ENCODE measurements at regions of chr1 and their contacts with region 1.

Region 1: GRCh38 chr1:200310824-200311223 is 99.0 kb downstream of the ZNF281 start:
- DNase-seq: no peak
- H3K4me3 ChIP-seq: no peak overlapping the region
- H3K27ac ChIP-seq: no peak overlapping the region
- H3K4me1 ChIP-seq: peaks cover 26% of the 10 kb centered on the region
- CTCF ChIP-seq: no peak

Region 2: DNA sequence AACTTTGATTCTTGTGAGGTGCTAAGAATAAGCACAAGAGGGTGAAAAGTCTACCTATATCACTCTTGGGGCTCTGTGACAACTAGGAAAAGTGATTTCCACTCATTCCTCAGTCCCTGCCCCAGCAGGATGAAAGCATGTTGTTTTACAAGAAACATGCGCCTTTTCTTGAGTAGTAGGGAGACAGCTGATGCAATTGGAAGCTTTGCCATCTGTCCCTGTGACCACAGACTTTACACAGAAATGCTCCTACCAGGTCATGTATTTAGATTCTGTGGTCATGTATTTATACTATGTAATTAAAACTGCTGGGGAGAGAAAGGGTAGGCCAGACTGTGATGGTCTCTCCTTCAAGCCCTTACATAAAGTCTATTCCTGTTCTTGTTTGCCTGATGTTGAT is 1226.5 kb before region 1 on chr1:
- CTCF ChIA-PET with region 1: no interaction called
- POLR2A ChIA-PET with region 1: interaction called, 11 read pairs
- intact Hi-C with region 1: no loop called
- DNase-seq: no peak
- H3K4me3 ChIP-seq: no peak overlapping the region
- H3K27ac ChIP-seq: no peak overlapping the region
- H3K4me1 ChIP-seq: peaks cover 21% of the 10 kb centered on the region
- CTCF ChIP-seq: no peak

Region 3: DNA sequence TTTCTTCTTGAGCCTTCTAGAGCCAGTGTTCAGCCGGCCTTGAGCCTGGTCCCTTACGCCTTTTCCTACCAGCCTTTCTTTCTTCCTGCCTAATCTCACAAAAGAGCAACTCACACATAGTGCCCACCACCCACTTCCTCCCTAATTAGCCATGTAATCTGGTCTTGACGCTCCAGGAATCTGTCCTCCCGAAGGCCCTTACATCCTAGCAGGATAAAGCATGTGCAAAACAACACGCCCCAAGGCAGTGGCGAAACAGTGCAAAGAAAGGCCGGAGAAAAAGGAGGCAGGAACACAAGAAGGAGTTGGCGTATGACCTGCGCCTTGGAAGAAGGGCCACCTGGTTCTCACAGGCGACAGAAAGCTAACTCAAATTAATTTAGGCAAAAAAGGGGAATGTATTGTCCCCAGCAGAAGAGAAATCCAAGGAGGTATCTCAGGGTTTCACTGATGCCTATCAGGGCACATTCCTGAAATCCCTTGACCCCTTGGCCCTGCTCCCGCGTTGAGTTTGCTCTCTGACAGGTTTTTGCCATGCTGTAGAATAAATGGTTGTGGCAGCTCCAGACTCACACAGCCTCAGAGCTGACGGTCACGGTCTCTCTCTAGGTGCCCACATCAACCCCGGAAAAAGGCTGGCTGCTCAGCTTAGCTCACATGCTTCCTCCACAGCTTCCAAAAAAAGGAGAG is 20.1 kb after region 1 on chr1:
- CTCF ChIA-PET with region 1: no interaction called
- POLR2A ChIA-PET with region 1: no interaction called
- intact Hi-C with region 1: no loop called
- DNase-seq: no peak
- H3K4me3 ChIP-seq: no peak overlapping the region
- H3K27ac ChIP-seq: no peak overlapping the region
- H3K4me1 ChIP-seq: no peaks in the 10 kb centered on the region
- CTCF ChIP-seq: no peak